Right ventricle myocardium inferior (tissue), 1 donor: ENCODE measurements at regions of chr2 and their contacts with region 1.

Region 1: DNA sequence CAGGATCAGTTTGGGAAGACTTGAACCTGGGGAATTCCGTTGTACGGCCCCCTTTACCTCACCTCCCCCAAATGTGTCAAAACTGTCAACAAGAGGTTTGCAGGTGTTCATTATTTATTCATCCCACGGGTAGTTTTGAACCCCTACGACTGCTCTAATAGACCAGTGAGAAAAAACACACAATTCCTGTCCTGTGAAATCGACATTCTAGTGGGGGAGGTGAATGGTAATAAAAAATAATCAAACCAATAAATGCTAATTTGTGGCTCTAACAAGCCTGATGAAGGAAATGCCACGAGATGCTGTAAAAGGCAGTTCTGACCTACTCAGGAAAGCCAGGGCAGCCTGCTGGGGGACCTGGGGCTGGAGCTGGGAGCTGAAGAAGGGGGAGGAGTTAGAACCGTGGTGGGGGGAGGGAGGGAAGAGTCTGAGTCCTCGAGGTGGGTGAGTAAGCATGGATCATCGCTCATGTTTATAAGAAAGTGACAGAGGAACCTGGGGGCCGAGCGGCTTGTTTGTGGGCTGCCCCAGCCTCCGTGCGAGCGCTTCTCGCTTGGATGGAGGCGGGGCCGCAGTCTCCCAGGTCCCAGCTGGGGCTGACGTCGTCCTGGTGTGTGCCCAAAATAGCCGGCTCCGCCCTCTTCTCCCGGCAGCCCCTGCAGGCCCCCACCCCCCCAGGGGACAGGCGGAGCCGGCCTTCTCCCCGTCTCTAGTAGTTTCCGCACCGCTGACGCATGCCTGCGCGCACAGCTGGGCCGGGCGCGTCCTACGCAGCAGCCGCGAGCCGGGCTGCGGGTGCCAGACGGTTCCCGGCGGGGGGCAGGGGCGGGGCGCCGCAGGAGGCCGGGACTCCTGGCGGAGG is at the start of gene DNAJB2:
- DNase-seq: peak; percentile 100
- ATAC-seq: peak; percentile 97
- total RNA-seq, gene DNAJB2: 80.4 TPM

Region 2: DNA sequence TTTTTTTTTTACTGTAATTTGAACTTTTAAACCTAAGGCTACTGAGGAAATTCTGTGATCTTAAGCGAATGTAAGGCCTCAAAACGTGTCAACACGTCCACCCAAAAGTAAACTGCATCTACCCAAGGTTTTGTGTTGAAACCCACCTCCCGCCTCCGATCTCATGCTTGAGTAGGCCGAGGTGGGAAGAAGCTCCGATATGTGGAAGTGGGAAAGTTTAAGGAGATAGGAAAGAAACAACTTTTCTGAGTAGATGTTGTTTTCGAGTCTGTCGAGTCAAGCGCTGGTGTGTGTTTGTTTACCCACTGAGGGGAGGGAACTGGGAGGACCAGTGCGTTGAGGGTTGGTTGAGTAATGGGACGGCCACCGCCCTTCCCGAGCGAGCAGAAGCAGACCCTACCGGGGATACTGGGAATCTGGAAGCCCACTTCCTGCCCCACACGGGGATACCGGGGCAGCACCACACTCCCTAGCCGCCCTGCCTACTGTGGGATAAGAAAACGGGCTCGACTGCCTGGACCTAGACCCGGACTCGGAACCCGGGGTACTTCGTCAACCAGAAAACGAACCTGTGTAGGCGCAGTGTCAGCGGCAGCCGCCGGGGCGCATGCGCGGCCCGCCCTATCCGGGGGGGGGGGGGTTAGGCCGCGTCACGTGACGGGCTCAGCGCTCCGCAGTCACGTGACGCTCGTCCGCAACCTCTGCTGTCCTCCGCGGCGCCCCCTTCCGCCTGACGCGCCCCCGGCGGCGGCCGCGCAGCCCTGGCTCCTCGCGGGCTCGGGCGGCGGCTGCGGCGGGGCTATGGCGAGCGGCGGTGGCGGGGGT is 101.1 kb before region 1 on chr2 and contains the start of gene RETREG2:
- intact Hi-C with region 1: loop called (anchors 2 kb)
- DNase-seq: peak; percentile 91
- ATAC-seq: peak; percentile 82
- total RNA-seq, gene RETREG2: 37.4 TPM

Region 3: GRCh38 chr2:219229305-219230058 is 49.4 kb before region 1 on chr2 and contains the starts of genes ANKZF1 and ATG9A:
- intact Hi-C with region 1: loop called (anchors 5 kb)
- DNase-seq: peak; percentile 99
- ATAC-seq: peak; percentile 99
- total RNA-seq, gene ANKZF1: 26.6 TPM
- total RNA-seq, gene ATG9A: 79.4 TPM

Region 4: GRCh38 chr2:219294356-219295351 is 15.8 kb after region 1 on chr2:
- intact Hi-C with region 1: loop called (anchors 1 kb)
- DNase-seq: peak; percentile 96
- ATAC-seq: peak; percentile 92

Region 5: DNA sequence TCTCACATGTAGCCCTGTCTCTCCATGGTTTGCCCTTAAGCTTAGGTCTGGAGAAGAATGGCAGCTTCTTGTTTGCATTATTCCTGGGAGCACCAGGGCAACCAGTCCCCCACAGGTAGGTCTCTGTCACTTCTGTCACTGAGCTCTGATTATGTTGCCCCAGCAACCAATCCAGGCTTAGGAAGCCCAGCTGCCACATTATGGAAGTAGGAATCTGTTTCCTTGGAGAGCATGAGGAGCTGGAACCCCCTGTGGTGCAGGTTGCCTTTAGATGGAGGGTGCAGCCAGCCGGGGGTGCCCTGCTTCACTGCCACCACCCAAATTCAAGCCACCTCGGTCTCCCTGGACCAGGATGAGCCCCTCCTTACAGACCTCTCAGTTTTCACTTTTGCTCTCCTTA is 48.8 kb after region 1 on chr2:
- intact Hi-C with region 1: no loop called
- DNase-seq: no peak
- ATAC-seq: no peak

Region 6: GRCh38 chr2:219509780-219510511 is 231.1 kb after region 1 on chr2:
- intact Hi-C with region 1: loop called (anchors 10 kb)
- DNase-seq: no peak
- ATAC-seq: peak; percentile 64